GM12878 (cell line): ENCODE measurements at regions of chr19 and their contacts with region 1.

Region 1: DNA sequence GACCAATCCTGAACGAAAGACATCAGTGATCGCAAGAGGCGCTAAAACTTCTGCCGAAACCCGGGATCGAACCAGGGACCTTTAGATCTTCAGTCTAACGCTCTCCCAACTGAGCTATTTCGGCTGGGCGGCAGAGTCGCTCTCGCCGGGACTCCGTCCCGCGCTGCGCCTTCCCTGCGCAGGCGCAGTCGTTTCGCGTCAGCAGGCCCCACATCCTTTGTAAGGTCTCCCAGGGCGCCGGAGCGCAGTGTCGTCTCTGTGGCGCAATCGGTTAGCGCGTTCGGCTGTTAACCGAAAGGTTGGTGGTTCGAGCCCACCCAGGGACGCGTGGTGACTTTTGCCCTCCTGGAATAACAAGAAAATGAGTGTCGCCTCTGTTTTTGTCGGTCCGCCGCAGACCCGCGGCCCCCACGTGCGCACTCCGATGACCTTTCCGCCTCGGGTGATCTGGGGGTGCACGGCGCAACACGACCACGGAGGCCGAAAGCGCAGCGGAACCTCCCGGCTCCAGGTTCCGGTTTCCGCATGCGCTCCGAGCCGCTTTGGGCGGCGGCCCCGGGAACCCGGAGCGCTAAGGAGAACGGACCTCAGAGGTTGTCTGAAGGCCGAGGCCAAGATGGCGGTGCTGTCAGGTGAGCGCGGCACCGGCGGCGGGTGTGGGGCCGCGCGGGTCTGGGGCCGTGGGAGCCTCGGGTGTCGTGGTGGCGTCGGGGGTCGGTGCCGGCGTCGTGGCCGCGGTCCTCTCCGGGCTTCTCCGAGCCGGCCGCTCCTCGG is at the start of gene NDUFS7:
- DNase-seq: peak; percentile 70
- ATAC-seq: peak; percentile 95
- H3K4me3 ChIP-seq: peak within 1 kb of the TSS; percentile 94
- H3K27ac ChIP-seq: peak within 1 kb of the TSS; percentile 86
- H3K4me1 ChIP-seq: no peaks in the 10 kb centered on the region
- H3K27me3 ChIP-seq: no peaks in the 10 kb centered on the region
- CTCF ChIP-seq: 0 out of 6 replicates have a peak, but pooled peaks of 1 of the 3 experiments have one; percentile 23
- EP300 ChIP-seq: peak in 1 of 2 experiments; percentile 9; a peak in 1 of 4 replicates
- POLR2A ChIP-seq: peak; percentile 96
- RAD21 ChIP-seq: 0 out of 2 replicates have a peak, but pooled peaks have one; percentile 5
- polyA plus RNA-seq, gene NDUFS7: 10.6 to 39.4 TPM

Region 2: GRCh38 chr19:1315470-1316231 is 67.8 kb before region 1 on chr19:
- CTCF ChIA-PET with region 1: interaction called, 10 read pairs
- POLR2A ChIA-PET with region 1: no interaction called
- RAD21 ChIA-PET with region 1: no interaction called
- SMC1A ChIA-PET with region 1: no interaction called
- in situ Hi-C with region 1: no loop called
- intact Hi-C with region 1: no loop called
- DNase-seq: no peak
- ATAC-seq: peak; percentile 94
- H3K4me3 ChIP-seq: no peak overlapping the region
- H3K27ac ChIP-seq: no peak overlapping the region
- H3K4me1 ChIP-seq: peaks cover 3% of the 10 kb centered on the region; the same call in 1 of the 2 replicates
- H3K27me3 ChIP-seq: no peaks in the 10 kb centered on the region
- CTCF ChIP-seq: peak; percentile 39 to 69 (median 65); a peak in 5 of 6 replicates
- EP300 ChIP-seq: no peak
- POLR2A ChIP-seq: no peak
- RAD21 ChIP-seq: peak; percentile 86

Region 3: DNA sequence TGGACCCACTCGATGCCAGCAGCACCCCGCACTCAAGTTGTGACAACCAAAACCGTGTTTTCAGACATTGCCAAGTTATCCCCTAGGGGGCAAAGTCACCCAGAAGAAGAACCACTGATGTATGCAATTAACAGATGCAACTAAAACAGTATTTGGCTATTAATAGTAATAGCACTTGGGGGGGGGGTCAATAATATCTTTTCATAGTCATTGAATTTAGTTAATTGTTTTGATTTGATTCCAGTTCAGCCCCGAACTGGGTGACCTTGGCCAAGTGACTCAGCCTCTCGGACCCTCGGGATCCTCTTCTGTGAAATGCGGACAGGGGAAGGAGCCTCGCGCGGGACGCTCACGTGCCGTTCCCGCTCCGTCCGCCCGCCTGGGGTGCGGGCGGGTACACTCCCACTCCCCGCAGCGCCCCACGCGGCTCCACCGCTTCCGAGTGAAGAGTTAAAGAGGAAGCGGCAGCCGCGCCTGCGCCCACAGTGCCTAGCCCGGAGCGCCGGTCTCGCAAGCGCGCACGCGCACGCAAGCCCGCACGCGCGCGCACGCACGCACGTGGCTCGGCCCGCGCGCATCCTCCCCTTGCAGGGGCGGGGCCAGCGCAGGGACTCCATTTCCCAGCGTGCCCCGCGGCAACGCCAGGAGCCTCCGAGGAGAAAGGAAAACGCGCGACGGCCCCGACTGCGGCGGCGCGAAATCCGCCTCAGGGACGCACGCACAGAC is 23.4 kb after region 1 on chr19:
- CTCF ChIA-PET with region 1: no interaction called
- POLR2A ChIA-PET with region 1: interaction called, 7 read pairs
- RAD21 ChIA-PET with region 1: no interaction called
- SMC1A ChIA-PET with region 1: no interaction called
- in situ Hi-C with region 1: no loop called
- intact Hi-C with region 1: loop called (anchors 1 kb)
- DNase-seq: peak; percentile 87
- ATAC-seq: peak; percentile 83
- H3K4me3 ChIP-seq: peak overlapping the region; percentile 57; the same call in 1 of the 2 replicates
- H3K27ac ChIP-seq: peak overlapping the region; percentile 45
- H3K4me1 ChIP-seq: peaks cover 19% of the 10 kb centered on the region
- H3K27me3 ChIP-seq: peaks cover 1 to 5% of the 10 kb centered on the region in 2 experiments; a peak in 2 of 4 replicates
- CTCF ChIP-seq: peak; percentile 41 to 45 (median 42); a peak in 5 of 6 replicates
- EP300 ChIP-seq: no peak
- POLR2A ChIP-seq: peak; percentile 66
- RAD21 ChIP-seq: peak; percentile 25; the same call in 1 of the 2 replicates